Left colon (tissue), 2 donors: ENCODE measurements at regions of chr2 and their contacts with region 1.

Region 1: GRCh38 chr2:160324161-160324800 is 124.2 kb upstream of the ITGB6 start:
- DNase-seq: peak; percentile 28 to 67
- ATAC-seq: peak; percentile 52

Region 2: DNA sequence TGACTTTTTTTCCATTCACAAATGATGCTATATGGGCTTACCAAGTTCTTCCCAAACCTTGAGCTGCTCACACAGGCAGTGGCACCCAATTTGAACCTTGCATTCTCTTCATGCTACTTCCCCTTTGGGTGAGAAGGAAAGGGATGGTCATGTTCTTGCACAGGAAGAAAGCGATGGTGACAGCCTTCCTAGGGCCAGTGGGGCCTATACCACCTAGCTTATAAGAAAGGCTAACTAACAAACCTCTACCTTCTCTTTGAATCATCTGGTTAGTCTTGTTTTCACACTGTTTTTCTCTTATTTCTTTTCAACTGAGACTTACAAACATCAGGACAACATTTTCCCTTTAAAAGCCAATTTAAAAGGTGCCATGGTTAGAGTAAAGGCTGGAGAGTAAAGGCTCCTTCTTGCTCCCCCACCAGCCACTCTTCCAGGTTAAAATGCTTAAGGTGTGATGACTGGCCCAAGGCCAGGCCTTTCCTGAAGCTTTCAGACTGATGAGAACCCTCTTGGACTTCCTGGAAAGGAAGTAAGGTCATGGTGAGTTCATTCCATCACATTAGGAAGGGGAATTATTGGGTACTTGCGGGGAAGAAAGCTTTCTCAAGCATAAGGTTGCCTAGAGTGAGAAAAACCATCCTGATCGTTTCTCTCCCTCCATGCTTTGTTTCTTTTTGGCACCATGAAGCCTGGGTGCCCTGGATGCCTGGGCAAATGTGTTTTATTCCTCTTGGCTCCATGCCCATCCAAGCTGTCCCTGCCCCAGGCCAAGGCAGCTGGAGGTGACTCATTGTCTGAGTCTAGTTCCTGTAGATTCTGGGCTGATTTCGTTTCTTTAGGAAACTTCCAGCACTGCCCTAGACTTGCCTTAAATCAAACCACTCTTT is 82.8 kb before region 1 on chr2:
- intact Hi-C with region 1: no loop called
- DNase-seq: peak; percentile 59 to 67
- ATAC-seq: peak; percentile 97

Region 3: GRCh38 chr2:160493227-160494028 is 169.1 kb after region 1 on chr2 and contains the start of gene RBMS1:
- intact Hi-C with region 1: loop called in 1 of 2 experiments (anchors 10 kb)
- DNase-seq: peak; percentile 33 to 50
- ATAC-seq: peak; percentile 62
- total RNA-seq, gene RBMS1: 7.5 to 18.6 TPM

Region 4: DNA sequence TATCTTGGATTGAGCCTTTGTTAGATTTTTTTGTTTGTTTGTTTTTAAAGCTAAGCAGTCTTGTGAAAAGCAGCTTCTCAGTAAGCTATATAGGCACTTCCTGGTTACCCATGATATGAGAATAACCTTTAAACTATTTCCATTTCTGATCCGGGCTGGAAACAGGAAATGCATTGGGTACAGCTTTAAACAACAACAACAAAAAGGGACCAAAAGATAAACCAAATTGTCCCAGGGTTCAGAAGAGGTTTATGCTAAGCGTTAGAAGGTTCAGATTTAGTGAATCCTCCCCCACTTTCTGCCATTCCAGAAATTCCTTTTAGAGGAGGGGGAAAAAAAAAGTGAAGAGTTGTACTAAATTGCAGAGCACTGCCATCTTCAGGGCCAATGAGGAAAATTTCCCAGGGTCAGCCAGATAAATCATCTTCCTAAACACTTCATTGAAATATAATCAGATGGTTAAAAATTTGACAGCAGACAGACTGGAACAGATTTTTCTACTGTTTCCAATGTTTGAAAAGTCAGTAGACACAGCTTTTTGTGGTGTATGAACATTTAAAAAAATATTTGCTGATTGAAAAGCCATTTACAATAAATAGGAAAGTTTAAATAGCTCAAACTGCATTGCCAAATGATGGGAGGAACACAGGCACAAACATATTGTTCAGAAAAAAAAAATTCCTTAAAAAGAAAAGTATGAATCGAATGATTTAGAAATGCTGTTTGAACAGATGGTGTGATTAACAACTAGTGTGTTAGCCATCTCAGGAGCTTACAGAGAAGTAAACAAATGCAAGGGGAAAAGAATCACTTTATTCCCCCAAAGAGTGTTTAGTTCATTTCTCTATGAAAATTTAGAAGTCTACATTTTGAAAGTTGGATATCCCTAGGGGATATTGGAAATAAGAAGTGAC is 646.0 kb after region 1 on chr2:
- intact Hi-C with region 1: loop called in 1 of 2 experiments (anchors 10 kb)
- DNase-seq: no peak
- ATAC-seq: peak; percentile 88